Left cardiac atrium (tissue), 4 donors: ENCODE measurements at regions of chr3 and their contacts with region 1.

Region 1: GRCh38 chr3:14950274-14950673 is 2.9 kb downstream of the NR2C2 start:
- DNase-seq: no peak
- ATAC-seq: no peak

Region 2: DNA sequence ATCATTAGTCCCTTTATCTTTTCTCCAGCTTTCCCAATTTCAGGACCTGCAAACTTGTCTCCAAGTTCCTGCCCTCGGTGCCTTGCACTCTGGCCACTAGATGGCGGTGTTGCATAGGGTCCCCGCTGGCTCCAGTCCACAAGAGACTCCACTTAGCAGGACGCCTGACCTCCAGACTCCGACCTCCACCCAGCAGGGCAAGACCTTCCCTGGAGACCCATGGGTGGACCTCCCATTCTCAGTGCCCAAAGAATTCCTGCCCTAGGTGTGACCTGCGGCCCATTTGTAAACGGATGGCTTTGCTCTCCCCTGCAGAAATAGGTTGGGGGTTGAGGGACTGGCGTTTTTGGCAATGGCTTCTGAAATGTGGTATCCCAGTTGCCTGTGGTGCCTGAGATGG is 689.0 kb before region 1 on chr3:
- intact Hi-C with region 1: no loop called
- DNase-seq: peak; percentile 84
- ATAC-seq: peak; percentile 86 to 88

Region 3: DNA sequence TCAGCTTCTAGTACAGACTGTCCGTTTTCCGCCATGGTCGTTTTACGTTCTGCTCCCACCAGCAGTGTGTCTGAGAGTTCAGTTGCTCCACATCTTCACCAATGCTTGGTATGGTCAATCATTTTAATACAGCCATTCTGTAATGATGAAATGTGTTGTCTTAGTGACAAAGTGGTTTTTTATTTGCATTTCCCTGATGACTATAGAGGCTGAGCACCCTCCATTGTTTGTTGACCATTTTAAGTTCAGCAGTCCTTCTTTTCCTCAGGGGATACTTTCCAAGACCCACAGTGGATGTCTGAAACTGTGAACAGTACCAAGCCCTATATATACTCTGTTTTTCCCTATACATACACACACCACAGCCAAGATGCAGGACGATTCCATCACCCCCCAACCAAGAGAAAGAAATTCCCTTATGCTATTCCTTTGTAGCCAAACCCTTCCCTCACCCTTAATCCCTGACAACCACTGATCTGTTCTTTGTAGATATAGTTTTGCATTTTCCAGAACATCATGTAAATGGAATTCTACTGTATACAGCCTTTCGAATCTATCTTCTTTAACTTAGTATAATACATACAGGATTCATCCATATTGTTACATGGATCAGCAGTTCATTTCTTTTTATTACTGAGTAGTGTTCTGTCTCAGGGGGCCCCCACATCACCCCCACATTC is 219.4 kb before region 1 on chr3:
- intact Hi-C with region 1: no loop called
- DNase-seq: no peak
- ATAC-seq: no peak

Region 4: GRCh38 chr3:14988988-14989394 is 38.7 kb after region 1 on chr3:
- intact Hi-C with region 1: loop called in 1 of 2 experiments (anchors 5 kb)
- DNase-seq: no peak
- ATAC-seq: peak in 1 of 2 donors; percentile 8